ENCODE measurements at regions of chr22 and their contacts with region 1.

Region 1: GRCh38 chr22:28373831-28374230 is 305.8 kb downstream of the TTC28 start:
- DNase-seq: no peak
- H3K4me3 Mint-ChIP-seq: peak overlapping the region; percentile 16
- H3K27ac Mint-ChIP-seq: no peak overlapping the region
- H3K4me1 Mint-ChIP-seq: peaks cover 48% of the 10 kb centered on the region
- H3K27me3 Mint-ChIP-seq: no peaks in the 10 kb centered on the region

Region 2: DNA sequence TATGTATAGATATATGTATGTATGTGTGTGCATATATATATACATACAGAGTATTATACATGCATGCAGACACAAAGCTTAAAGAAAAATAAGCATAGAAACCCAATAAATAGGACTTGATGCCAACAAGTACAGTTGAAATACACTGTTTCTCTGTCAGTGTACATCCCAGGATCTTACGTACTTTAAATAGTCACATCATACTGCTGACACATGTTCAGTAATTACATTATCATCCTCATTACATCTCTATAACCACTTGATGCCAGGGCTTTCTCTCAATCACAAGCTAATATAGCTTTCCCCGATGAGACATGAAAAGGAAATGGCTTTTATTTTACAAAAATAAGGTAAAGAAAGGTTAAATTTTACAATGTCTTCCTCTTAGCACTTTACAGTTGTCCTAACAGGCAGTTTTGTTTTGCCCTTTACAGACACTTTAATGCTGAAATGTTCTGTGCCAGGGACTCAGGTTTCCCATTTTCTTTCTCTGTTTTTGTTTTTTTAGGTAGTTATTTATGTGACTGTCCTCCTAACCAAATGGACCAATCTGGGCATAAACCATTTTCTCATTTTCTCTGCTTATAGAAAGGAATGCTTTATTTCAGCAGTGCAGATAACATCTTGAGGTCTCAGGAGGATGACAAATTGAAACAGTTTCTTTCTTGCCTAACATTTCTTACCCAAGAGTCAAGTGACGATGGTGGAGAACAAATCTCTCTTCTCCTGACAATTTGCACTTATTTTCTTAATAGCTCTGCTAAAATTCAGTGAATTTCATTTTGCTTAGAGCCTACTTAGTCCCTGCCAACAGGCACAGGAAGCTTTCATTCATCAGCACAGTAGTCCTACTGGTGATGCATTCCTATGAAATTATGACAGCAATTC is 44.4 kb before region 1 on chr22:
- intact Hi-C with region 1: loop called (anchors 5 kb)
- DNase-seq: no peak
- H3K4me3 Mint-ChIP-seq: no peak overlapping the region
- H3K27ac Mint-ChIP-seq: no peak overlapping the region
- H3K4me1 Mint-ChIP-seq: peaks cover 10% of the 10 kb centered on the region
- H3K27me3 Mint-ChIP-seq: peaks cover 3% of the 10 kb centered on the region

Region 3: DNA sequence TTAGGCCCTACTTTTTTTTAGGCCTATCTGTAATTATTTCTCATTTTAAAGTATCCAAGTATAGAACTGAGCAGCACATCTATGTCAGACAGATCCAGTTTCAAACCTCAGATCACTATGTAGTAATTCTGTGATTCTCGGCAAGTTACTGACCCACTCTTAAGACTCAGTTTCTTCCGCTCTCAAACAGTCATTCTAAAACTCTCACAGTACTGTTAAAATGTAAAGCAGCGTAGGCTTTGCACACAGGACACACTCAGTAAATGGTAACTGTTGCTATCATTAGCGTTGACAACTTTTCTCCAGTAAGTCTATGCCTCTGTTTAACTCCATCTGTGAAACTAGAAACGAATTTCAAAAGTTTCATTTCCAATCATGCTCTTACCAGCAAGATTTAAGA is 28.7 kb after region 1 on chr22:
- intact Hi-C with region 1: loop called (anchors 1 kb)
- DNase-seq: no peak
- H3K4me3 Mint-ChIP-seq: peak overlapping the region; percentile 39
- H3K27ac Mint-ChIP-seq: peak overlapping the region; percentile 80
- H3K4me1 Mint-ChIP-seq: peaks cover 32% of the 10 kb centered on the region
- H3K27me3 Mint-ChIP-seq: peaks cover 1% of the 10 kb centered on the region